ENCODE measurements at regions of chr20 and their contacts with region 1.

Region 1: DNA sequence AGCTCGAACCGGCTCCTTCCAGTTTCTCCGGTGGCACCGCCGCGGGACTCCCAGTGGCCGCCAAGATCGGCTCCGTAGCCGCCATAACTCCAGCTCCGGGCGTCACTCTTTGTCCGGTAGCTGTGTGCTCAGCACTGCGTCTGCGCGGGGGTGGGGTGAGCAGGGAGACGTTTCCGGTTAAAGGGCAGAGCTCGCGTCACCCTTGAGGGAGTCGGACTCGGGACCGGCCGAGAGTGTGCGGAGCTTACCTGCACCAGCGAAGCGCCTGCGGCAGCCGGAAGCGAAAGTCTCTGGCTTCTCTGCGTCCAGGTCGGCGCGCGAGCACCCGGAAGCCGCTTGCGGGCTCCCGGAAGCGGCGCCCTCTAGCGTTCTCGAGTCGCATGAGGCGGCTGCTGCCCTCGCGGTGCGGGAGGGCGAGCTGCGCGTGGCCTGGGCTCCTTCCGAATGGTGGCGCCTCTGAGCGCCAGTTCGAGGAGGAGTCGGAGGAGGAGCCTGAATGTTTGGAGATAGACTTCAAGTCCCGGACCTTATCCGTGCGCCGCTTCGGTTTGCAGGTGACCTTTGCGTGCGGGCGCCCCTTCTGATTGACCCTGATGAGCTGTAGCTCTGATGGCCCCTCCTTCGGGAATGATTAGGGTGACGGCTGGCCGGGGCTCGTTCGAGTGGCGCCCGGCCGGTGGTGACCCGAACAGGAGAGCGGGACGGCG is at the start of gene SCAND1:
- DNase-seq: peak; percentile 94 to 99 (median 96)
- ATAC-seq: peak; percentile 82
- H3K4me3 ChIP-seq: peak within 1 kb of the TSS; percentile 96
- H3K4me3 Mint-ChIP-seq: peak within 1 kb of the TSS; percentile 99
- H3K27ac ChIP-seq: peak within 1 kb of the TSS; percentile 99
- H3K27ac Mint-ChIP-seq: peak within 1 kb of the TSS; percentile 98
- H3K4me1 ChIP-seq: peaks cover 31% of the 10 kb centered on the region
- H3K4me1 Mint-ChIP-seq: peaks cover 30% of the 10 kb centered on the region
- H3K27me3 ChIP-seq: no peaks in the 10 kb centered on the region
- H3K27me3 Mint-ChIP-seq: no peaks in the 10 kb centered on the region
- CTCF ChIP-seq: peak; percentile 100
- total RNA-seq, gene SCAND1: 77.2 to 82.7 TPM

Region 2: GRCh38 chr20:35277531-35278395 is 676.6 kb before region 1 on chr20 and contains the start of gene MMP24OS:
- CTCF ChIA-PET with region 1: interaction called, 3 read pairs
- POLR2A ChIA-PET with region 1: interaction called, 19 read pairs
- intact Hi-C with region 1: loop called in 1 of 2 experiments (anchors 5 kb)
- DNase-seq: peak; percentile 79 to 96 (median 86)
- ATAC-seq: peak; percentile 86
- H3K4me3 ChIP-seq: peak within 1 kb of the TSS; percentile 76
- H3K4me3 Mint-ChIP-seq: peak within 1 kb of the TSS; percentile 96
- H3K27ac ChIP-seq: peak within 1 kb of the TSS; percentile 93 to 95
- H3K27ac Mint-ChIP-seq: peak within 1 kb of the TSS; percentile 97
- H3K4me1 ChIP-seq: peaks cover 39% of the 10 kb centered on the region
- H3K4me1 Mint-ChIP-seq: peaks cover 35% of the 10 kb centered on the region
- H3K27me3 ChIP-seq: no peaks in the 10 kb centered on the region
- H3K27me3 Mint-ChIP-seq: no peaks in the 10 kb centered on the region
- CTCF ChIP-seq: peak; percentile 20
- total RNA-seq, gene MMP24OS: 71.8 to 74.8 TPM

Region 3: DNA sequence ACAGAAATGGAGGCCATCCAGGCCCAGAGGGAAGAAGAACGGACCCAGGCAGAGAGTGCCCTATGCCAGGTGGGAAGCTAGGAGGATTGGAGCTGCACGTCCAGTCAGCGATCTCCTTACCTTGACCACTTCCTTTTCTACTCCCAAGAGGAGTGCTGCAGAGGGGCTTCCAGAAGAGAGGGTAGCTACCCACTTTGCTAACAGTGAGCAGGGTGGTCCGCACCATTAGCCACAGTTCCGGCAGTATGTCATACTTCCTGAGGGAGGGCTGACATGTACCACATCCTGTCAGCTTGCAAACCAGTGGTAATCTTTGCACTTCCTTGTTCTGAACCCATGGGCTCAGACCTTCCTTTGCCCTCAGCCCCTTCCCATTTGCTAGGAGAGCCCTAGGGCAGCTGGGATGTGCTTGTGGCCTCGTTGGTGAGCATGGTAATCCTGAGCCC is 463.6 kb before region 1 on chr20:
- CTCF ChIA-PET with region 1: no interaction called
- POLR2A ChIA-PET with region 1: interaction called, 23 read pairs
- intact Hi-C with region 1: no loop called
- DNase-seq: peak; percentile 41 to 89 (median 59)
- ATAC-seq: peak; percentile 99
- H3K4me3 ChIP-seq: peak overlapping the region; percentile 94
- H3K4me3 Mint-ChIP-seq: peak overlapping the region; percentile 100
- H3K27ac ChIP-seq: peak overlapping the region; percentile 63 to 87
- H3K27ac Mint-ChIP-seq: peak overlapping the region; percentile 98
- H3K4me1 ChIP-seq: peaks cover 59% of the 10 kb centered on the region
- H3K4me1 Mint-ChIP-seq: peaks cover 72% of the 10 kb centered on the region
- H3K27me3 ChIP-seq: no peaks in the 10 kb centered on the region
- H3K27me3 Mint-ChIP-seq: no peaks in the 10 kb centered on the region
- CTCF ChIP-seq: no peak

Region 4: GRCh38 chr20:35699127-35699975 is 255.0 kb before region 1 on chr20 and contains the starts of genes NFS1 and ROMO1:
- CTCF ChIA-PET with region 1: no interaction called
- POLR2A ChIA-PET with region 1: interaction called, 10 read pairs
- intact Hi-C with region 1: loop called in 1 of 2 experiments (anchors 10 kb)
- DNase-seq: peak; percentile 77 to 94 (median 82)
- ATAC-seq: peak; percentile 89
- H3K4me3 ChIP-seq: peak within 1 kb of the TSS; percentile 95
- H3K4me3 Mint-ChIP-seq: peak within 1 kb of the TSS; percentile 95
- H3K27ac ChIP-seq: peak within 1 kb of the TSS; percentile 93 to 97
- H3K27ac Mint-ChIP-seq: peak within 1 kb of the TSS; percentile 84
- H3K4me1 ChIP-seq: peaks cover 23% of the 10 kb centered on the region
- H3K4me1 Mint-ChIP-seq: peaks cover 52% of the 10 kb centered on the region
- H3K27me3 ChIP-seq: no peaks in the 10 kb centered on the region
- H3K27me3 Mint-ChIP-seq: no peaks in the 10 kb centered on the region
- CTCF ChIP-seq: peak; percentile 11
- total RNA-seq, gene NFS1: 10.6 to 11.5 TPM
- total RNA-seq, gene ROMO1: 32.9 to 35.8 TPM

Region 5: DNA sequence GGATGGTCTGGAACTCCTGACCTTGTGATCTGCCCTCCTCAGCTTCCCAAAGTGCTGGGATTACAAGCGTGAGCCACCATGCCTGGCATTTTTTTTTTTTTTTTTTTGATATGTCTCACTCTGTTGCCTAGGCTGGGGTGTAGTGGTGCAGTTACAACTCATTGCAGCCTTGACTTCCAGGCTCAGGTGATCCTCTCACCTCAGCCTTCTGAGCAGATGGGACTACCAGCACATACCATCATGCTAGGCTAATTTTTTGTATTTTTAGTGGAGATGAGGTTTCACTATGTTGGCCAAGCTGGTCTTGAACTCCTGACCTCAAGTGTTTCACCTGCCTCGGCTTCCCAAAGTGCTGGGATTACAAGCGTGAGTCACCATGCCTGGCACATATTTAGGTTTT is 148.3 kb before region 1 on chr20:
- CTCF ChIA-PET with region 1: no interaction called
- POLR2A ChIA-PET with region 1: no interaction called
- intact Hi-C with region 1: no loop called
- DNase-seq: no peak
- ATAC-seq: no peak
- H3K4me3 ChIP-seq: no peak overlapping the region
- H3K4me3 Mint-ChIP-seq: no peak overlapping the region
- H3K27ac ChIP-seq: no peak overlapping the region
- H3K27ac Mint-ChIP-seq: no peak overlapping the region
- H3K4me1 ChIP-seq: no peaks in the 10 kb centered on the region
- H3K4me1 Mint-ChIP-seq: peaks cover 28% of the 10 kb centered on the region
- H3K27me3 ChIP-seq: no peaks in the 10 kb centered on the region
- H3K27me3 Mint-ChIP-seq: no peaks in the 10 kb centered on the region
- CTCF ChIP-seq: no peak

Region 6: GRCh38 chr20:35871311-35871771 is 83.0 kb before region 1 on chr20:
- CTCF ChIA-PET with region 1: no interaction called
- POLR2A ChIA-PET with region 1: no interaction called
- intact Hi-C with region 1: no loop called
- DNase-seq: no peak
- ATAC-seq: no peak
- H3K4me3 ChIP-seq: no peak overlapping the region
- H3K4me3 Mint-ChIP-seq: no peak overlapping the region
- H3K27ac ChIP-seq: no peak overlapping the region
- H3K27ac Mint-ChIP-seq: peak overlapping the region; percentile 23
- H3K4me1 ChIP-seq: no peaks in the 10 kb centered on the region
- H3K4me1 Mint-ChIP-seq: no peaks in the 10 kb centered on the region
- H3K27me3 ChIP-seq: no peaks in the 10 kb centered on the region
- H3K27me3 Mint-ChIP-seq: no peaks in the 10 kb centered on the region
- CTCF ChIP-seq: no peak

Region 7: GRCh38 chr20:35994994-35995453 is 40.7 kb after region 1 on chr20:
- CTCF ChIA-PET with region 1: interaction called, 13 read pairs
- POLR2A ChIA-PET with region 1: interaction called, 20 read pairs
- intact Hi-C with region 1: no loop called
- DNase-seq: peak; percentile 76 to 89 (median 82)
- ATAC-seq: peak; percentile 85
- H3K4me3 ChIP-seq: no peak overlapping the region
- H3K4me3 Mint-ChIP-seq: no peak overlapping the region
- H3K27ac ChIP-seq: no peak overlapping the region
- H3K27ac Mint-ChIP-seq: no peak overlapping the region
- H3K4me1 ChIP-seq: peaks cover 7% of the 10 kb centered on the region
- H3K4me1 Mint-ChIP-seq: no peaks in the 10 kb centered on the region
- H3K27me3 ChIP-seq: no peaks in the 10 kb centered on the region
- H3K27me3 Mint-ChIP-seq: peaks cover 5% of the 10 kb centered on the region
- CTCF ChIP-seq: peak; percentile 89

Region 8: DNA sequence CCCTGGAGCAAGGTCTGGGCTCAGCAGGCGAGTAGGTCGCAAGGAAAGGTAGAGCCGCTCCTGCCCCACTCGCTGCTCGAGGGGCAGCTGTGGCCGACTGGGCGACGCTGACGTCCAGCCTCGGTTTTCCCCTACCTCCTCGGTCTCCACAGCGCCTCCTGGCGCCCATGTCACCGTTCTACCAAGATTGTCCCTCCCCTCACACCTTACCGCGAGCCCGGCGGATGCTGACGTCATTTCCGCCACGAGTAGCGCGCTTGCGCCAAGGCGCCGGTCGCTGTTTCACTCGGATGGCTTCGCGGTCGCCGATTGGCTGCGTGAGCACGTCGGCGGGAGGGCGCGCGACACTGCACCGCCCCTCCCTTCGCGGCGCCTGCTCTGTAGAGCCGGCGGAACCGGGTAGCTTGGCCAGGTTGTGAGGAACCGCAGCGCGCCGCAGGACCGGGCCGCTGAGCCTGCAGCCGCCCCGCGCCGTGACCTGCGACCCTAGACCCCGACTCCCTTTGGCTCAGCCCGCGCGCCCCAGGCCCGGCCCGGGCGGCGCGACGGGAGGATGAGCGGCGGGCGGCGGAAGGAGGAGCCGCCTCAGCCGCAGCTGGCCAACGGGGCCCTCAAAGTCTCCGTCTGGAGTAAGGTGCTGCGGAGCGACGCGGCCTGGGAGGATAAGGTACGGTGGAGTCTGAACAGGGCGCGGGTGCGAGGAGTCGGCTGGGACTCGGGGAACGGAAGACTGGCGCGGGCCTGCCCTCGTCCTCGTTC is 651.2 kb after region 1 on chr20 and contains the start of gene RAB5IF:
- CTCF ChIA-PET with region 1: no interaction called
- POLR2A ChIA-PET with region 1: interaction called, 11 read pairs
- intact Hi-C with region 1: no loop called
- DNase-seq: peak; percentile 97 to 100 (median 99)
- ATAC-seq: peak; percentile 89
- H3K4me3 ChIP-seq: peak within 1 kb of the TSS; percentile 100
- H3K4me3 Mint-ChIP-seq: peak within 1 kb of the TSS; percentile 98
- H3K27ac ChIP-seq: peak within 1 kb of the TSS; percentile 93 to 97
- H3K27ac Mint-ChIP-seq: peak within 1 kb of the TSS; percentile 97
- H3K4me1 ChIP-seq: peaks cover 37% of the 10 kb centered on the region
- H3K4me1 Mint-ChIP-seq: peaks cover 35% of the 10 kb centered on the region
- H3K27me3 ChIP-seq: no peaks in the 10 kb centered on the region
- H3K27me3 Mint-ChIP-seq: no peaks in the 10 kb centered on the region
- CTCF ChIP-seq: peak; percentile 95
- total RNA-seq, gene RAB5IF: 62.6 to 74.8 TPM